IMR-90 (cell line): ENCODE measurements at regions of chr15 and their contacts with region 1.

Region 1: GRCh38 chr15:42385206-42385979 is 26.1 kb downstream of the CAPN3 start:
- DNase-seq: peak; percentile 62
- ATAC-seq: peak; percentile 95
- H3K4me3 ChIP-seq: no peak overlapping the region
- H3K27ac ChIP-seq: no peak overlapping the region
- H3K4me1 ChIP-seq: peaks cover 6% of the 10 kb centered on the region
- H3K27me3 ChIP-seq: peaks cover 2% of the 10 kb centered on the region; the same call in 1 of the 2 replicates
- CTCF ChIP-seq: peak; percentile 77
- POLR2A ChIP-seq: no peak
- RAD21 ChIP-seq: peak; percentile 81

Region 2: DNA sequence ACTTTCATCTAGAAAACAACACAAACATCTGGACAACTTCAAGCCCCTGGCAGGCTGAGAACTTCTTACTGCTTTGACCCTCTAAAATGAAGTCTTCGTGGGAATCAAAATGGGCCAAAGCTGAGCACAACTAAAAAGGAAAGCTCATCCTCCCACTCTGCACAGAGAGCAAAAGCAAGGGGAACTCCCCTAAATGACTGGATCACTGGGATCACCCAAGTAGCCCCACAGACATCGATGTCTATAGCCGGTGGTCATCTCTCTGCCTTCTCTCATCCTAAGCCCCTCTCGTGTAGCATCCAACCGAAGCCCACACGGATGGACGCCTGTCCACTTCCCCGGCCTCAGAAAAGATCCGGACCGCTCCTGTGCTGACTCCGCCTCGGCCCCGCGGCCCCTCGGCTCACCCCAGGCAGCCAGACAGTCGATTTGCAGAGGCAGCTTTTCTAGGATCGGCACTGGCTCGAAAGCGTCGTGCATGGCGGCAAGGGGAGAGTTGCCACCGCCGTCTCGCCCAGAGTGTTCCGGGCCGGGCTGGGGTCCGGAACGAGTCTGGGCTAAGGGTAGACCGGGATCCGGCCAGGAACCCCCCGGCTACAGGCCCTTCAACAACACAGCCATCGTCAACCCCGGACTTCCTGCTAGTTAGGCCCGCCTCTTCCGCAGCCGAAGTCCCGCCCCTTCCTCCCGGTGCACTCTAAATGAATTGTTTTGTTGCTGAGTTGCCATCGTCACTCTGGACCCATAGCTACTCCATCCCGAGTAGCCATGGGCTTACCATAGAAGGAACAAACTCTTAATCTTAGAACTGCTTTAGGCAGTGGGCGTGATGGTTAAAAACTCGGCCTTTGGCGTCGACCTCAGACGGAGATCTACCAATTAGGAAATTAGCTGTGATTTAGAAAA is 177.5 kb before region 1 on chr15 and contains the start of gene VPS39:
- CTCF ChIA-PET with region 1: no interaction called
- POLR2A ChIA-PET with region 1: no interaction called
- dilution Hi-C with region 1: no loop called
- in situ Hi-C with region 1: no loop called
- intact Hi-C with region 1: loop called (anchors 5 kb)
- DNase-seq: peak; percentile 82
- ATAC-seq: peak; percentile 99
- H3K4me3 ChIP-seq: peak within 1 kb of the TSS; percentile 93
- H3K27ac ChIP-seq: peak within 1 kb of the TSS; percentile 93
- H3K4me1 ChIP-seq: peaks cover 4% of the 10 kb centered on the region; the same call in 1 of the 2 replicates
- H3K27me3 ChIP-seq: no peaks in the 10 kb centered on the region
- CTCF ChIP-seq: no peak
- POLR2A ChIP-seq: peak; percentile 83
- RAD21 ChIP-seq: no peak
- total RNA-seq, gene VPS39: 52.2 and 56.9 TPM in 2 replicates

Region 3: DNA sequence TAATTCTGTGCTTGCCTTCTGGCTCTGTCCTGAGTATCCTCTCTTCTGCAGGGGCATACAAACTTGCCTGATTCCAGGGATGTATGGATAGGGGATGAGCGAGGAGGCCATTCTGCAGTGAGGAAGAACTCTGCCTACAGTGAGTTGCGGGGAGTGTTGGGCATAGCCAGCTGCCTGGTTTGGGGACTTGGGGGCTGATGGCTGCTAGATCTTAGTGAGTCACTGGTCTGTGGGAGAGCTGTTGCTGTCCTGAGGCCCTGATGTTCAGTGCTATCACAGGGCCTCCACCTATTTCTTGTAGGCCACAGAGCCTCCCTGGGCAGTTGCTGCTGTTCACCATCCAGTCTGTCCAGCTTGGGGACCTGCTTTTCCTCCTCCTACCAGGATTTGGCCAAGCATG is 331.2 kb after region 1 on chr15:
- CTCF ChIA-PET with region 1: no interaction called
- POLR2A ChIA-PET with region 1: no interaction called
- dilution Hi-C with region 1: no loop called
- in situ Hi-C with region 1: no loop called
- intact Hi-C with region 1: no loop called
- DNase-seq: peak; percentile 32
- ATAC-seq: peak; percentile 72
- H3K4me3 ChIP-seq: no peak overlapping the region
- H3K27ac ChIP-seq: no peak overlapping the region
- H3K4me1 ChIP-seq: peaks cover 5% of the 10 kb centered on the region
- H3K27me3 ChIP-seq: no peaks in the 10 kb centered on the region
- CTCF ChIP-seq: no peak
- POLR2A ChIP-seq: no peak
- RAD21 ChIP-seq: no peak